CD8-positive, alpha-beta T cell (primary cell): ENCODE measurements at regions of chr3 and their contacts with region 1.

Region 1: DNA sequence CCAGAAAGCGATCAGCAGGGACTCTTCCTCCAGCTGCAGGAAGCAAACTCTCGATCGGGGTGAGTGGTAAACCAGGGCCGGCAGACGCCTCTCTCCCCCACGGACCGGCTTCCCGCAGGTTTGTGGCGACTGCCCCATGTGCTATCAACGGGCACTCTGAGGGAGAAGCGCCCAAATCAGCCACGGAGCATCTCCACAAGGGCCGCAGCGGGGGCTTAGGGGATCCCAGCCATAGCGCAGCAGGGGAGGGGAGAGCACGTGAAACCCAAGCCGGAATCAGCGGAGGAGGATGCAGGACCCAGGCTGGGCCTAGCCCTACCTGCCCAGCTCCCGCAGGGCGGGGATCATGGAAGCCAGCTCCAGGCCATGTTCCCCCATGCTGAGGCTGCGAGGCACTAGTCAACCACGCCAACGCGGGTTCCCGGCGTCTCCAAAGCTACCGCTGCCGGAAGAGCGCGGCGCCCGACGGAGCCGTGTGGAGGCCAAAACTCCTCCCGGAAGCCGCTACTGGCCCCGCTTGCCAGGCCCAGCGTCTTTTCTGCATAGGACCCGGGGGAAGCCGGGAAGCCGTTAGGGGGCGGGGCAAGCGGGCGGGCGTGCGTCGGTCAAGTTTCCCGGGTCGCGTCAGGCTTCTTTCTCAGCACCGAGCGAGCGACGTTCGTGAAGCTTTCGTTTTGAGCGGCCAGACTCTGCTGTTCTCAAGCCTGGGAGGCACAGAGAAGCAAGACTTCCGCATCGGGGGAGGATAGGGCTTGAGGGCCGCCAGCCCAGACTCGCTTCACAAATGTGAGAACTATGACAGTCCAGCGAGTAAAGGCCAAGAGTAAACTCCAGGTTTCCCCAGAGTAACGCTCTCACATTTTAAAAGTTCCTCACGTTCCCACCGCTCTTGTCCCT is at the start of gene ATR:
- DNase-seq: peak; percentile 91 to 98 (median 97)
- ATAC-seq: peak; percentile 91
- H3K4me3 ChIP-seq: peak within 1 kb of the TSS; percentile 92 to 99
- H3K4me3 Mint-ChIP-seq: peak within 1 kb of the TSS; percentile 96
- H3K27ac ChIP-seq: peak within 1 kb of the TSS; percentile 97 to 99
- H3K27ac Mint-ChIP-seq: peak within 1 kb of the TSS; percentile 98
- H3K4me1 ChIP-seq: peaks cover 45% of the 10 kb centered on the region
- H3K4me1 Mint-ChIP-seq: peaks cover 52% of the 10 kb centered on the region
- H3K27me3 ChIP-seq: no peaks in the 10 kb centered on the region
- H3K27me3 Mint-ChIP-seq: no peaks in the 10 kb centered on the region
- CTCF ChIP-seq: no peak
- total RNA-seq, gene ATR: 26.7 to 28.0 TPM

Region 2: DNA sequence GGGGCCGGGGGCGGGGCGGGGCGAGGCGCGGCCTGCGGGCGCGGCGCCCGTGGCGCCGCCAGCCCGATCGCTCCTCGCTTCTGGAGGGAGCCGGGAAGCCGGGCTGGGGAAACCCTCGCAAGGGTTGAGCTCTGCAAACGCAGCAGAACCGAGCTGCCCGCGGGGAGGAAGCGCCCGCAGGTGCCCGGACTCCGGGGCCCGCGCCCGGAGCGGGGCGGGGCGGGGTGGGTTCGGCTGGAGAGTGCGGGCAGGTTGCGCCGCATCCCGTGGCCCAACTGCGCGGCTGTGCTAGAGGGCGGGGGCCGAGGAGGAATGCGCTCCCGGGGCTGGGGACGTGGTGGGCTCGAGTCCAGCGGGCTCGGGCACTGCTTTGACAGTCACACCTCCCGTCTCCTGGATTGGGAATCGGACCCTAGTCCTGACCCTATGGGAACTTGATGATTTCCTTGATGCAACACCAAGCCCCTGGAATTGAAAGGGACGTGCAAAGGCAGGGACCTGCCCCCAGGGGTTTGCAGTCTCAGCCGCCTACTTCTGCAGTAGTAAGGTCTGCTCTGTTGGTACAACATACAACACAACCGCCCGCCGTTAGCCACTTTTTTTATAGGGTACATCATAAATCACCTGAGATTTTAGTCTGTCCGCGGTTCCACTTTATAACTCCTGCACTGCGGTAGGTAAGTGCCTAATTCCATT is 1176.0 kb before region 1 on chr3:
- CTCF ChIA-PET with region 1: no interaction called
- POLR2A ChIA-PET with region 1: no interaction called
- intact Hi-C with region 1: no loop called
- DNase-seq: peak; percentile 15 to 80 (median 56)
- ATAC-seq: peak; percentile 67
- H3K4me3 ChIP-seq: peak overlapping the region; percentile 70 to 85
- H3K4me3 Mint-ChIP-seq: peak overlapping the region; percentile 96
- H3K27ac ChIP-seq: peak overlapping the region; percentile 81 to 88
- H3K27ac Mint-ChIP-seq: peak overlapping the region; percentile 97
- H3K4me1 ChIP-seq: peaks cover 25% of the 10 kb centered on the region
- H3K4me1 Mint-ChIP-seq: peaks cover 70% of the 10 kb centered on the region
- H3K27me3 ChIP-seq: no peaks in the 10 kb centered on the region
- H3K27me3 Mint-ChIP-seq: no peaks in the 10 kb centered on the region
- CTCF ChIP-seq: no peak

Region 3: DNA sequence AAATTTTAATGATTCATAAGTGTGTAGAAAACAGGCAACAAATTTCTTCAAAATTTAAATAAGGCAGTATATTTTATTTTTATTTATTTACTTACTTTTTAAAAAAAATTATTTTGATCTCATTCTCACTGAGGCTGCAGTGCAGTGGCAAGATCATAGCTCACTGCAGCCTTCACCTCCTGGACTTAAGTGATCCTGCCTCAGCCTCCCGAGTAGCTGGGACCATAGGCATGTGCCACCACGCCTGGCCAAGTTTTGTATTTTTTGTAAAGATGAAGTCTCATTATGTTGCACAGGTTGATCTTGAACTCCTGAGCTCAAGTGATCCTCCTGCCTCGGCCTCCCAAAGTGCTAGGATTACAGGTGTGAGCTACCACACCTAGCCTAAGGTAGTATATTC is 69.5 kb before region 1 on chr3:
- CTCF ChIA-PET with region 1: no interaction called
- POLR2A ChIA-PET with region 1: interaction called, 8 read pairs
- intact Hi-C with region 1: loop called (anchors 5 kb)
- DNase-seq: peak in 2 of 9 experiments; percentile 15 to 36
- ATAC-seq: peak; percentile 62
- H3K4me3 ChIP-seq: peak overlapping the region in 1 of 2 experiments; percentile 51
- H3K4me3 Mint-ChIP-seq: peak overlapping the region; percentile 90
- H3K27ac ChIP-seq: peak overlapping the region in 1 of 2 experiments; percentile 74
- H3K27ac Mint-ChIP-seq: peak overlapping the region; percentile 95
- H3K4me1 ChIP-seq: no peaks in the 10 kb centered on the region
- H3K4me1 Mint-ChIP-seq: peaks cover 14% of the 10 kb centered on the region
- H3K27me3 ChIP-seq: no peaks in the 10 kb centered on the region
- H3K27me3 Mint-ChIP-seq: no peaks in the 10 kb centered on the region
- CTCF ChIP-seq: no peak

Region 4: DNA sequence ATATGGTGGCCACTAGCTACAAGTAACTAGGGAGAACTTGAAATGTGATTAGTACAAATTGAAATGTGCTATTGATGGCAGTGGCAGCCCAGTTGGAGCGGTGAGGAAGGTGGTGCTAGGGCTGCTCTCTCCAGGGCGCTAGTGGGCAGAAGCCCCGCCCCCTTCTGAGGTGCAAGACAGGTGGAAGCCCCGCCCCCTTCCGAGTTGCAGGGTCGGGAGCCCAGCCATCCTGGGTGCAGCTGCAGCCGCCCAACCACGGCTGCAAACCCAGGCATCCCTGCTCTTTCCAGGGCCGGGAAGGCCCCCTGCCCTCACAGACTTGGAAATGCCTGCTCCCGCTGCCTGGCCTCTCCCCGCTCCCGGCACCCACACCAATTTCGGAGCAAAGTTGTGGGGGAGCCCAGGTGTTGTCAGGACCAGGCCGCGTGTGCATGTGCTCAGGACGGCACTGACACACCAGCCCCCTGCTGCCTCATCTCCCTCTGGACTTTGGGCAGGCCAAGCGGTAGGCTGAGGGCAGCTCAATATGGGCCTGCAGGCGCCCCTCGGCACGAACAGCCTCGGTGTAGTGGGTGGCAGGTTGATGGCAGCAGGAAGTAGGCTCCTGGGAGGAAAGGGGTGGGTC is 10.1 kb before region 1 on chr3:
- CTCF ChIA-PET with region 1: no interaction called
- POLR2A ChIA-PET with region 1: no interaction called
- intact Hi-C with region 1: no loop called
- DNase-seq: peak in 1 of 9 experiments; percentile 6
- ATAC-seq: no peak
- H3K4me3 ChIP-seq: no peak overlapping the region
- H3K4me3 Mint-ChIP-seq: no peak overlapping the region
- H3K27ac ChIP-seq: no peak overlapping the region
- H3K27ac Mint-ChIP-seq: no peak overlapping the region
- H3K4me1 ChIP-seq: no peaks in the 10 kb centered on the region
- H3K4me1 Mint-ChIP-seq: peaks cover 19% of the 10 kb centered on the region
- H3K27me3 ChIP-seq: no peaks in the 10 kb centered on the region
- H3K27me3 Mint-ChIP-seq: no peaks in the 10 kb centered on the region
- CTCF ChIP-seq: no peak

Region 5: DNA sequence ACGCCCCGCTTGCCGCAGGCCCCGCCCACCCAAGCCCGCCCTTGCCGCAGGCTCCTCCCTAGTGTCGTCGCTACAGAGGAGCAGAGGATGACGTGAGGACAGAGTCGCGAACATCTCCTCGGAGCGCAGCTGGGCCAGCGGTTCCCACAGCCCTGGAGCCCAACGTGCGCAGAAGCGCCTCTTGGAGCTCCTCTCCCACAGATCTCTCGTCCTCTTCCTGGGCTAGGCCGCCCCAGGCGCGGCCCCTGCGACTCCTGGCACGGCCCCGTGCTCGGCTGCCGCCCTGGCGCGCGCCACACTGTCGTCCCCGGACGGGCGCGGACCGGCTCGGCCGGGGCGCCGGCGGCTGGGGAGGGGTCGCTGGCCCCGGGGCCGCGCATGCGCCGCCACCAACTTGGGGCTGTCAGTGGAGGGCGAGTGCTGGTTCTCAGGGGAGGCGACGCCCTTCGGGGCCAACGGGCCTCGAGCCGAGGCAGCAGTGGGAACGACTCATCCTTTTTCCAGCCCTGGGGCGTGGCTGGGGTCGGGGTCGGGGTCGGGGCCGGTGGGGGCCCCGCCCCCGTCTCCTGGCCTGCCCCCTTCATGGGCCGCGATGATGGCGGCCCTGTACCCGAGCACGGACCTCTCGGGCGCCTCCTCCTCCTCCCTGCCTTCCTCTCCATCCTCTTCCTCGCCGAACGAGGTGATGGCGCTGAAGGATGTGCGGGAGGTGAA is 145.6 kb after region 1 on chr3 and contains the start of gene TRPC1:
- CTCF ChIA-PET with region 1: no interaction called
- POLR2A ChIA-PET with region 1: interaction called, 7 read pairs
- intact Hi-C with region 1: loop called (anchors 1 to 2 kb)
- DNase-seq: peak; percentile 2 to 93 (median 70)
- ATAC-seq: peak; percentile 96
- H3K4me3 ChIP-seq: peak within 1 kb of the TSS; percentile 54 to 63
- H3K4me3 Mint-ChIP-seq: peak within 1 kb of the TSS; percentile 91
- H3K27ac ChIP-seq: peak within 1 kb of the TSS in 1 of 2 experiments; percentile 63
- H3K27ac Mint-ChIP-seq: peak within 1 kb of the TSS; percentile 92
- H3K4me1 ChIP-seq: peaks cover 9% of the 10 kb centered on the region
- H3K4me1 Mint-ChIP-seq: peaks cover 20% of the 10 kb centered on the region
- H3K27me3 ChIP-seq: peaks cover 0 to 3% of the 10 kb centered on the region in 2 experiments
- H3K27me3 Mint-ChIP-seq: peaks cover 28% of the 10 kb centered on the region
- CTCF ChIP-seq: no peak
- total RNA-seq, gene TRPC1: 3.3 to 3.4 TPM

Region 6: DNA sequence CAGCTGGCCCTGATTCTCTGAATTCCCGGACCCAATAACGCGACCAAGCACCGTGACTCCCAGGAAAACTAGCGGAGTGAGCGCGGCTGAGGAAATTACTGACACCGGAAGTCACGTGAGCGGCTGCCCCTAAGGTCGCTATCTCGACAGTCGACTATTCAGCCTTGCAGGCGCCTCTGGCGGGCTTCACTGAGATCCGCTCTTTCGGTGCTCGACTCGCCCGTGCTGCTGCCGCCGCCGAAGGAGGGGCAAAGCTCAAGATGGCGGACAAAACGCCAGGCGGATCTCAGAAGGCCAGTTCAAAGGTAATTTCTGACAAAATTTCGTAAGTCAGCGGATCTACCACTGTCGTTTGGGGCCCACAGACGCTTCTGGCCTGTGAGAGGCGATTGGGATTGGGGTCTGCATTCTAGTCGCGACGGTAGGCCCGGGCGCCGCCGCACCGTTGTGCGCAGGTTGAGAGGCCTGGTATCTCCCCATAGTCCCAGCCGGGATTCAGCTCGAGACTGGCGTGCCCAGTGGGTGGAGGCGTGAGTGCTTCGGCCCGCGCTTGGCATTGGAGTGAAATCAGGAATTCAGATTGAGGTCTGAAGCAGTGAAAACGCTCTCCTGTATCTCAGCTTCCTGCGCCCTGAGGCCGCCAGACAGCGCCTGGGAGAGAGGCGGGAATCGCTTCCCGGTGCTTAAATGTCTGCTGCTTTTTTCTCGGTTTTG is 423.0 kb after region 1 on chr3 and contains the start of gene U2SURP:
- CTCF ChIA-PET with region 1: interaction called, 3 read pairs
- POLR2A ChIA-PET with region 1: interaction called, 21 read pairs
- intact Hi-C with region 1: loop called in 1 of 2 experiments (anchors 1 kb)
- DNase-seq: peak; percentile 82 to 97 (median 90)
- ATAC-seq: peak; percentile 93
- H3K4me3 ChIP-seq: peak within 1 kb of the TSS; percentile 81 to 92
- H3K4me3 Mint-ChIP-seq: peak within 1 kb of the TSS; percentile 99
- H3K27ac ChIP-seq: peak within 1 kb of the TSS; percentile 91 to 92
- H3K27ac Mint-ChIP-seq: peak within 1 kb of the TSS; percentile 99
- H3K4me1 ChIP-seq: peaks cover 34% of the 10 kb centered on the region
- H3K4me1 Mint-ChIP-seq: peaks cover 42% of the 10 kb centered on the region
- H3K27me3 ChIP-seq: no peaks in the 10 kb centered on the region
- H3K27me3 Mint-ChIP-seq: no peaks in the 10 kb centered on the region
- CTCF ChIP-seq: no peak
- total RNA-seq, gene U2SURP: 186 TPM